RWPE1 (cell line): ENCODE measurements at regions of chr7 and their contacts with region 1.

Region 1: GRCh38 chr7:123797673-123798527 is 47.1 kb upstream of the HYAL4 start:
- DNase-seq: peak; percentile 75
- H3K27ac ChIP-seq: no peak overlapping the region
- CTCF ChIP-seq: peak; percentile 73

Region 2: GRCh38 chr7:123865517-123866117 is 67.7 kb after region 1 on chr7:
- CTCF ChIA-PET with region 1: interaction called, 30 read pairs
- POLR2A ChIA-PET with region 1: no interaction called
- DNase-seq: peak; percentile 26
- H3K27ac ChIP-seq: no peak overlapping the region
- CTCF ChIP-seq: peak; percentile 84

Region 3: DNA sequence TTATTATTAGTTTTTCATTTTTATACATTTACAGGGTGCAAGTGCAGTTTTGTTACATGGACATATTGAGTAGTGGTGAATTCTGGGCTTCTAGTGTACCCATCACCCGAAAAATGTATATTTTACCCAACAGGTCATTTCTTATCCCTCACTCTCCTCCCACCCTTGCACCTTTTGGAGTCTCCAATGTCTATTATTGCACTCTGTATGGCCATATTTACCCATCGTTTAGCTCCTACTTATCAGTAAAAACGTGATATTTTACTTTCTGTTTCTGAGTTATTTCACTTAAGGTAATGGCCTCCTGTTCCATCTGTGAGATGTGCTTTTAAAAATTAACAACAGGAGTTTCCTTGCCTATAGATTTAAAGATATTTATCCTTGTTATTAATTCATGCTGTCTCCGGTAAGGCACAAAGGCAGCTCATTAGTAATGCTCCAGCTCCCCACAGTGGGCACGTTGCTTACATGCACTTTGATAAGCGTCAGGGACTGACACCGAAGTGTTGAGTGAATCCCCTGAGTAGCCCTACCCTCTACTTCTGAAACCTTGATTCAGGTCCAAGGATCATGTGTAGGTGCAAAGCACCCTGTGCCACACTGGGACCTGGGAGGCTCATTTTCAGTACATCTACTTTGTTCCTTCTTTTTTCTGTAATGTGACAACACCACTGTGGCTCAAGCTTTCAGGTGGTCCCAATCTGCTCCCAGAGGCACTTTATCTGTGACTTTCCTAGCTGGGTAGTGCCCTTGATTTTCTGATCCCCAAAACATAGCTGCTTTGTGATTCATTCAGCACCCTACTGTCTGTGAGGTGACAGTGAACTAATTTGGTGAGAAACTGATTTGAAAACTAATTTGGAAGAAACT is 74.3 kb after region 1 on chr7:
- CTCF ChIA-PET with region 1: interaction called, 19 read pairs
- POLR2A ChIA-PET with region 1: no interaction called
- DNase-seq: peak; percentile 49
- H3K27ac ChIP-seq: no peak overlapping the region
- CTCF ChIP-seq: peak; percentile 83